Left cardiac atrium (tissue), 4 donors: ENCODE measurements at regions of chr19 and their contacts with region 1.

Region 1: GRCh38 chr19:35140962-35141637 is 2.0 kb upstream of the FXYD7 start:
- DNase-seq: peak; percentile 95
- ATAC-seq: peak; percentile 68 to 73

Region 2: DNA sequence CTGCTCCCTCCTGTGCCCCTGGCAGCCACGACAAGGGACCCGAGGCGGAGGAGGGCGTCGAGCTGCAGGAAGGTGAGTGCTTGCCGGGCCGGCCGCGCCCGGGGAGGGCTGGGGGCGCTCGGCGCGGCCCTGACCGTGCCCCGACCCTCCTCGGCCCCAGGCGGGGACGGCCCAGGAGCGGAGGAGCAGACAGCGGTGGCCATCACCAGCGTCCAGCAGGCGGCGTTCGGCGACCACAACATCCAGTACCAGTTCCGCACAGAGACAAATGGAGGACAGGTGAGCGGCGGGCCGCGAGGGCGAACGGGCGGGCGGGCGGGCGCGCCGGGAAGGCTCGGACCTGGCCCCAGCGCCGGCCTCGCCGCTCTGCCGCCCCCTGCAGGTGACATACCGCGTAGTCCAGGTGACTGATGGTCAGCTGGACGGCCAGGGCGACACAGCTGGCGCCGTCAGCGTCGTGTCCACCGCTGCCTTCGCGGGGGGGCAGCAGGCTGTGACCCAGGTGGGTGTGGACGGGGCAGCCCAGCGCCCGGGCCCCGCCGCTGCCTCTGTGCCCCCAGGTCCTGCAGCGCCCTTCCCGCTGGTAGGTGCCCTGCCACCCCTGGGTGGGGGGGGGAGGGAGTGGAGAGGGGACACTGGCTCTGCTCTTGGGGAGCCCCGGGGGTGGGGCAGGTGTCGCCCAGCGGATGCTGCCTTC is 128.5 kb after region 1 on chr19:
- intact Hi-C with region 1: loop called in 1 of 2 experiments (anchors 5 kb)
- DNase-seq: peak; percentile 87
- ATAC-seq: peak; percentile 51 to 54